Naive thymus-derived CD8-positive, alpha-beta T cell (primary cell): ENCODE measurements at regions of chr14 and their contacts with region 1.

Region 1: GRCh38 chr14:98237939-98238338 is 1034.1 kb downstream of the BCL11B start:
- DNase-seq: no peak
- ATAC-seq: peak in 1 of 2 donors; percentile 29
- H3K4me3 Mint-ChIP-seq: no peak overlapping the region
- H3K27ac Mint-ChIP-seq: peak overlapping the region in 4 of 10 donors; percentile 53 to 74 (median 66)
- H3K4me1 Mint-ChIP-seq: peaks cover 26 to 57% (median 42%) of the 10 kb centered on the region in 4 donors
- H3K27me3 Mint-ChIP-seq: no peaks in the 10 kb centered on the region

Region 2: DNA sequence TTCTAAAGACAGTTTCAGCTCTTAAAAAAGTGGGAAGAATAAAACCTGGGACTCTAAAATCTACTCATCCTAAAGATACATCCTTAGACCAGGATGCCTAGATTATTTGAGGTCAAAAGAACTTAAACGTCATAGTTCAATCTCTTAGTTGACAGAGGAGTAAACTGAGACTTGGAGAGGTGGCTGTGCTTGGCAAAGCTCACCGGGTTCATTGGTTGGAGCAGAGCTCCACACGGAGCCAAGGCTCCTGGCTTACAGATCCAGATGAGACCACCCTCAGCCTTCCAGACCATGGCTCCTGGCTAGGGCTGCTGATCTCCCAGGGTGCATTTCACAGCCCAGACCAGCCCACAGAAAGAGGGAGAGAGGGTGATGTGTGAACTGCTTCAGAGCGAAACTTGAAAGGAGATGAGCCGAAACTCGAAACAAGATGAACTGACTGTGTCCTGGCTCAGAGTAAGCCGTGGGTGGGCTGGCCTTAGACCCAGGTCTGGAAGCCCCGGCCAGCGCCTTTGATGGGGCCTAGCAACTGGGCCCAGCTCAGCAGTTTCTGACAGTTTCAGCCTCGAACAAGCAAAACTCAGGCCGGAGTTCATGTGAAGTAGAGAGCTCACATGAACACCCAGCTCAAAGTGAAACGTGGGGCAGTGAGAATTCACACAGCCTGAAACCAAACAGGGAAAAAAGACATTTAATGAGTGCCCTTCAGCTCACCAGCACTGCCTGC is 10.8 kb before region 1 on chr14:
- POLR2A ChIA-PET with region 1: interaction called, 10 read pairs
- DNase-seq: peak in 1 of 10 donors; percentile 36
- ATAC-seq: peak; percentile 4 to 11
- H3K4me3 Mint-ChIP-seq: peak overlapping the region; percentile 31 to 79 (median 65)
- H3K27ac Mint-ChIP-seq: peak overlapping the region; percentile 84 to 99 (median 94)
- H3K4me1 Mint-ChIP-seq: peaks cover 54 to 87% (median 85%) of the 10 kb centered on the region in 4 donors
- H3K27me3 Mint-ChIP-seq: no peaks in the 10 kb centered on the region

Region 3: DNA sequence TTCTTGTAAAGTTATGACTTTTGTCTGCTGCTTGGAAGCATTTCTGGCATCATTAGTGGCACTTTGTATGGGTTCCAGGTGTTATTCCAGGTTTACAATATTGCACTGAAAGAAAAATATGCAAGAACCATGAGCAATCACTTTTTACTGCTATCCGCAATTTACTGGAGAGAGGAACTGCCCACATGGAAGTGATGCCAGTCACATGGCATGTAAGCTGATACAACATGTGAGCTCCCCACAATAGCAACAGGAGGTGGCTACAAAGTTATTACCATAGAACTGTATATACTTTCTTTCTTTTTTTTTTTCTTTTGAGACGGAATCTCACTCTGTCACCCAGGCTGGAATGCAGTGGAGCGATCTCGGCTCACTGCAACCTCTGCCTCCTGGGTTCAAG is 21.9 kb after region 1 on chr14:
- POLR2A ChIA-PET with region 1: no interaction called
- DNase-seq: no peak
- ATAC-seq: no peak
- H3K4me3 Mint-ChIP-seq: no peak overlapping the region
- H3K27ac Mint-ChIP-seq: no peak overlapping the region
- H3K4me1 Mint-ChIP-seq: peaks cover 0 to 30% (median 22%) of the 10 kb centered on the region in 4 donors
- H3K27me3 Mint-ChIP-seq: no peaks in the 10 kb centered on the region

Region 4: DNA sequence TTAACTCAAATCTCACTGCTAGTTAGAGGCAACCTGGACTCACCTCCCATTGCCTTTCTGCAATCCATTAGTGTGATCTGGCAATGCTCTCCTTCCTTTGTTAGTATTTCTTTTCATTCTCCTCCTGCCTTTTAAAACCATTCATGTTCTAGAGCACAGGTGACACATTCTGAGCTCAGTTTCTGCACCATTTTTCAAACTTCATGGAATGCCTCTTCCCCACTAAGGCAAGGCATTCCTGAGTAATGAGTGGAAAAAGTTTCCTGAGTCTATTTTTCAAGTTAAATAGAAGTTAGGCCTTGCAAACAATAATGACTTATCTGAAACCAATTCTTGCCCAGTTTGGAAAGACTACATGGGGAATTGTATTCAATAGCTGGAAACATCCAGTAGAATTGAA is 32.3 kb after region 1 on chr14:
- POLR2A ChIA-PET with region 1: no interaction called
- DNase-seq: no peak
- ATAC-seq: no peak
- H3K4me3 Mint-ChIP-seq: no peak overlapping the region
- H3K27ac Mint-ChIP-seq: peak overlapping the region in 1 of 10 donors; percentile 24
- H3K4me1 Mint-ChIP-seq: peaks cover 11 to 27% (median 16%) of the 10 kb centered on the region in 4 donors
- H3K27me3 Mint-ChIP-seq: no peaks in the 10 kb centered on the region

Region 5: GRCh38 chr14:98323836-98324235 is 85.9 kb after region 1 on chr14:
- POLR2A ChIA-PET with region 1: no interaction called
- DNase-seq: no peak
- ATAC-seq: no peak
- H3K4me3 Mint-ChIP-seq: no peak overlapping the region
- H3K27ac Mint-ChIP-seq: peak overlapping the region in 4 of 10 donors; percentile 17 to 49 (median 34)
- H3K4me1 Mint-ChIP-seq: peaks cover 19 to 29% (median 21%) of the 10 kb centered on the region in 4 donors
- H3K27me3 Mint-ChIP-seq: no peaks in the 10 kb centered on the region

Region 6: DNA sequence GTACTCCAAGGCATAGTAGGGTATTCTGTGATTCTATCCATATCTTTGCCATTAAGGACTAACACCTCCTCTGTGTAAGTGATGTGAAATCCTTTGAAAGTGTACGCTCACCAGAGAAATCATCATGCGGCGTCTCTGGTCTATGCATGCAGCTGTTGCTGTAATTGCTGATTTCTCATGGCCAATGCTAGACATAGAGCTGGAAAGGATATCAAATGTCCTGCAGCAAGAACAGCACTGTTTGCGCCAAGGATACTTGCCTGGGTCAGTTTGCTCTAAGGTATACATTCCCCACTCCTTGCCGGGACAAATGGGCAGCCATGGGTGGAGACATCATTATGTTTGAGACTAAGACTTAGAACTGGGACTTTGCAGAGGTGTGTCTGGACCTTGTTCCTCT is 137.6 kb after region 1 on chr14:
- POLR2A ChIA-PET with region 1: no interaction called
- DNase-seq: no peak
- ATAC-seq: no peak
- H3K4me3 Mint-ChIP-seq: no peak overlapping the region
- H3K27ac Mint-ChIP-seq: no peak overlapping the region
- H3K4me1 Mint-ChIP-seq: peaks cover 2 to 9% (median 6%) of the 10 kb centered on the region in 4 donors
- H3K27me3 Mint-ChIP-seq: no peaks in the 10 kb centered on the region